Left lung (tissue), 14 donors: ENCODE measurements at regions of chr19 and their contacts with region 1.

Region 1: DNA sequence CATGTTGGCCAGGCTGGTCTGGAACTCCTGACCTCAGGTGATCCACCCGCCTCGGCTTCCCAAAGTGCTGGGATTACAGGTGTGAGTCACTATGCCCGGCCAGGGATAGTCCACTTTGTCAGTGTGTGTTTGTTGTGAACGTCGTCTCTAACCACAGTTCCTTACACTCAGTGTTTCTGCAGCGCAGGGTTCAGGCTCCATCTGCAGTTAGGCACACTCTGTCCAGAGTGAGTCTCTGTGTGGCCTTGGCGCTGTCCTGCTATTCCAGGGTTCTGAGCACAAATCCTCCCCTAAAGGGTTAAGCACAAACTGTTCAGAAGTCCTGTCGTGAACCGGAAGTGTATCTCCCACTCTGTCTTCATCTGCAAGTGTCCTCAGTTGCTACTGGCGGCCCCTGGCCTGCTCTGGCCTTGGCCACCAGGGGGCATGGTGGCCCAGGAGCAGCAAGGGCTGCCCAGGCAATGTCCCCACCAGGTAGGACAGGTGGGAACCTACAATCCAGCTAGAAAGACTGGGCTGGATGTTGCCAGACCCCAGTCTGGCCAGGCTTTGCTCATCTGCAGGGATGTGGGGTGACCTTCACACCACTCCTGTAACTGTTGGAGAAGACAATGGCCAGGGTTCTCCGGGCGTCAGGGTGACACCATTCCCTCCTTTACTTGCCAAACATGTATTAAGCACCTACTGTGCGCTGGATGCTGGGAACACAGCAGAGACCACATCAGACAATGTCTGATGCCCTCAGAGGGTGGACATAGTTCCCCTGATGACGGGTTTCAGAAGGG is 38.7 kb upstream of the GATAD2A start:
- DNase-seq: peak; percentile 46 to 93 (median 68)
- ATAC-seq: peak; percentile 94
- H3K4me3 ChIP-seq: no peak overlapping the region
- H3K27ac ChIP-seq: no peak overlapping the region
- H3K4me1 ChIP-seq: peaks cover 6 to 35% of the 10 kb centered on the region in 2 donors
- H3K27me3 ChIP-seq: no peaks in the 10 kb centered on the region
- CTCF ChIP-seq: peak; percentile 93 to 96

Region 2: DNA sequence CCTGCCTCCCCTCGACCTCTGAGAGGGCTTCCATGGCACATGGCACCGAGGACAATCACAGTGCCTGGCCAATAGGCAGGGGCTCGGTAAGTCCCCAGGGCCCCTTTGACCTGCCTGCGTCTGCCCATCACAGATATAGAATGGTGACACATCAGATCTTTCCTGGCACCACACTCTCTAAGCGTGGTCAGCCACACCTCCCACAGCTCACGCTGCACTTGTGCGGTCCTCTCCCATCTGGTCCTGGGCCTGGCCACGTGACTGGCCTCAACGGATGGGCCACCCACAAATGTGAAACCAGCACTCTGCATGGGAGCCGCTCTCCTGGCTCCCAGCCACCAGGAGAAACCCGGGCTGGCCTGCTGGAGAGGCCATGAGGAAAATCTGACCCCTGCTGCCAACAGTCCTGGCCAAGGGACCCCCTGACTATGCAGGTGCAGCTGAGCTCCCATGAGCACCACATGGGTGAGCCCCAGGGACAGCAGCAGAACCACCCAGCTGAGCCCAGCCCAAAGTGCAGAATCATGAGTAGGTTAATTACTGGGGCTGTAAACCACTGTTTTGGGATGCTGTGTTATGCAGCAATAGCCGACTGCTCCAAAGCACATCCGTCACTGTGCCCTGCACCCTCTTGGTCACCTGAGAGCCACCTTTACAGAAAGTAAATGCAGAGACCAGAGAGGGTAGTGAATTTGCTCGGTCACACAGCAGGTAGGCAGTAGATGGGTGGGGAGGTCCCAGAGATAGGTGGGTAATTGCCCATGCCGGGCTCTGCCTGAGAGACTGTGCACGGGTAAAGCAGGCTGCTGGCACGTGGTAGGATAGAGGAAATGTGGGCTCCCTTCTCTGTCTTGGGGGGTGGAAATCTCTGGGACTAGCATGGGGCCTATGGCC is 187.0 kb before region 1 on chr19:
- intact Hi-C with region 1: no loop called
- DNase-seq: no peak
- ATAC-seq: no peak
- H3K4me3 ChIP-seq: no peak overlapping the region
- H3K27ac ChIP-seq: no peak overlapping the region
- H3K4me1 ChIP-seq: peaks cover 0 to 10% of the 10 kb centered on the region in 2 donors
- H3K27me3 ChIP-seq: no peaks in the 10 kb centered on the region
- CTCF ChIP-seq: no peak

Region 3: DNA sequence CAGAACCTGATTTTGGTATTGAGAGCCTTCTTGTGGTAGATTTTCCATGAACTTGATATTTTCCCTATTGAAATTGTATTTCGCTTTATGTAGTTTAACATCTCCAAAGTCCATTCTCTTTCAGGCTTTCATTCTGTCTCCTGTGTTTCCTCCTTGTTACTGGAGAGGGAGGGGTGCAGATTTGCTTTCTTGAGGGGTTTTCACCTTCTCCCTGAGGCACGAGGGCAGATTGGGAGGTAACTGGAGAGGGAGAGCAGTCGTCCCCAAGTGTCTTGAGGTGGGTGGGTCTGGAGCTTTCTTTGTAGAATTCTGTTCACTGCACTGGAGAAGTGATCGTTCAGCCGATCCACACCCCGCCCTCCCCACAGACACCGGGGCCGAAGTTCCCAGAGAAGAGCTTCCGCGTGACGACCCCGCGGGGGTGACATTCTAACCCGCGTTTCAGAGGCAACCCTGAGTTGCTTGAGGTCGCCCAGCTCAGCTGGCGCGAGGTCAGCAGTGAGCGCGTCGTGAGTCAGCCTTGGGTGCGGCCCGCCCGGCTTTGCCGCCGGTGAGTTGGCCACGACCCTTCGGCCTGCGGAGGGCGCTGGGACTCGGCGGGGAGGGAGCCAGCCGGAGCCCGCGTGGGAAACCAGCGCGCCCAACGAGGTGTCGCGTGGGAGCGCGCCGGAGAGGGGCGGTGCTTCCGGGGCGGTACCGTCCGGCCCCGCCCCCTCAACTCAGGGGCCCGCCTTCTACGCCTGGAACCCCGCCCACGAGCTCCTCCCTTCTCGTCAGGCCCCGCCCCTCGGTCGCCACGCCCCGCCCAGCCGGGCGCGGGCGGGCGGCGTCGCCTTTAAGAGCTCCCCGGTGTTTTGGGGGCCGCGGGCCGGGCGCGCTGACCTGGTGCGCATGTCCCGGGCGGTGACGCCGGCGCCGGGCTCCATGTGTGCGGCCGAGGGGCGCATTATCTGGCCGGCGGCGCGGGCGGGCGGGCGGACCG is 38.4 kb after region 1 on chr19 and contains the start of gene GATAD2A:
- intact Hi-C with region 1: no loop called
- DNase-seq: peak; percentile 92 to 97 (median 94)
- ATAC-seq: peak; percentile 95
- H3K4me3 ChIP-seq: peak within 1 kb of the TSS; percentile 75 to 94
- H3K27ac ChIP-seq: peak within 1 kb of the TSS; percentile 88 to 91
- H3K4me1 ChIP-seq: peaks cover 17 to 67% of the 10 kb centered on the region in 2 donors
- H3K27me3 ChIP-seq: no peaks in the 10 kb centered on the region
- CTCF ChIP-seq: peak in 1 of 2 donors; percentile 33
- polyA plus RNA-seq, gene GATAD2A: 39.3 to 61.1 (median 46.9) TPM

Region 4: DNA sequence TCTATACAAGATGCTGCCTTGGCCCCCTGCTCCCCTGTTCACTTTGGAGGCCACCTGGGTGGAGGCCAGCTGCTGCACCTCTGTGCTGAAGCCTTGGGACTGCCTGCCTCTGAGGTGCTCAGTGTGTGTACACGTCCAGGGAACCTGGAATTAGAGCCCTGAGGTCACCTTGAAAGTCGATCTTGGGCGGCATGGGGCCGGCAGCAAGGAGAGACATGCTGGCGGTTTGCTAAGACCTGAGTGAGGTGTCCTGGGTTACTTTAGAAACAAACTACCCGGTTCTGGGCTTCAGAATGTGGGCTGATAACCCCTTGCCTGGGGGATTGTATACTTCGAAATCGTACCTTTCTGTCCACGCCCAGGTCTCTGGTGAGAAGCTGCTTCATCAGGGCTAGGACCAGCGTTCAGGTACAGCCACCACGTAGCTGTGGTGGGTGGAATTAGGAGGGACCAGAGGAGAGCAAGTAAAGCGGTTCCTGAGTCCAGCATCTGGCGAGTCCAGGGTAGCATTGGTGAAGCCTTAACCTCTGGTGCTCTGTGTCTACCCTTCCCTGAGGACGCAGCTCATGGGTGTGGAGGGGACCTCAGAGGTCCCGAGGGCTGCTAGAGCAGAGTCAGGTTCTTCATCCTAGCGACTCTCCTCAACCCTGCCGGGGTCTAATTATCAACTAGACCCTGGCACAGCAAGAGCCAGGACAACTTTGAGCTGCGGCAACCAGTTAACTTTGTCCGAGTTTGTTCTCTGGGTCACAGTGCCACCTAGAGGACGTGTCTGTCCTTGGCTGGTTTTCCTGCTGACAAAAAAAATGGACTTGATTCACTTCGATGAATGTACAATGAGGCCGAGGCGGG is 123.2 kb after region 1 on chr19:
- intact Hi-C with region 1: loop called in 1 of 2 experiments (anchors 5 kb)
- DNase-seq: peak; percentile 73 to 88 (median 76)
- ATAC-seq: peak; percentile 77
- H3K4me3 ChIP-seq: no peak overlapping the region
- H3K27ac ChIP-seq: peak overlapping the region; percentile 67 to 86
- H3K4me1 ChIP-seq: peaks cover 18 to 50% of the 10 kb centered on the region in 2 donors
- H3K27me3 ChIP-seq: no peaks in the 10 kb centered on the region
- CTCF ChIP-seq: peak; percentile 76 to 91